CD4-positive, alpha-beta memory T cell (primary cell): ENCODE measurements at regions of chr17 and their contacts with region 1.

Region 1: DNA sequence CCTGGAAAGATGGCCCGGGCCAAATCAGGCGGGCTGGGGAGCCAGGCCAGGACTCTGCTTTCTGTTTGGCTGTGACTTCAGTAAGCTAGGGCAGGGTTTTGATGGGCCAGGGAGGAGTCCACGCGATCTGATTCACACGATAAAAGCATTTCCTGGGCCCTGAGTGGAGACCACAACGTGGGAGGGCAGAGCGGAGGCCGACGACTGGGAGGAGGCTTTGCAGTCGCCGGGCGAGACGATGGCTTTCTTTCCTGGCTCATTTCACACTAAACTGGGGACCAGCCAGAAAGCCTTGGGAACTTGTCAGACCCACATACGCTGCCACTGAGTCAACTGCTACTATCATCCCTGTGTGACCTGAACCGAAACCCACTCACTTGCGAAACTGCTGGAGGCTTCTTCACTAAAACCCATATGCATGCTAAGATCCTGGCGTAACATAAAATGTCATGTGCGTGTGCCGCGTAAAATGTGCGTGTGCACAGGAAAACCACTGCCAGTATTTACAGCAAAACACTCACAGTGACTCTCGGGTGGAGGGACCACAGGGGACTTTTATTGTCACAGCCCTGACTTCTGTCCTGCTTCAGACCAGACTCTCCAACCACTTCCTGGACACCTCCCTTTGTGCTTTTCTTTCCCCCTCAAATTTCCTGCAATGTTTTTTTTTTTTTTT is 14.2 kb upstream of the RHBDF2 start:
- DNase-seq: peak; percentile 91 to 95 (median 94)
- H3K4me3 ChIP-seq: peak overlapping the region; percentile 20 to 25
- H3K4me3 Mint-ChIP-seq: peak overlapping the region; percentile 69 to 86 (median 80)
- H3K27ac ChIP-seq: peak overlapping the region; percentile 76
- H3K27ac Mint-ChIP-seq: peak overlapping the region; percentile 94 to 100 (median 99)
- H3K4me1 ChIP-seq: peaks cover 82% of the 10 kb centered on the region
- H3K4me1 Mint-ChIP-seq: peaks cover 31 to 85% (median 51%) of the 10 kb centered on the region in 4 donors
- H3K27me3 ChIP-seq: no peaks in the 10 kb centered on the region
- H3K27me3 Mint-ChIP-seq: no peaks in the 10 kb centered on the region

Region 2: GRCh38 chr17:76492989-76493501 is 22.4 kb before region 1 on chr17:
- CTCF ChIA-PET with region 1: no interaction called
- POLR2A ChIA-PET with region 1: interaction called, 13 read pairs
- intact Hi-C with region 1: no loop called
- DNase-seq: peak; percentile 15 to 53 (median 37)
- H3K4me3 ChIP-seq: peak overlapping the region; percentile 34 to 46
- H3K4me3 Mint-ChIP-seq: peak overlapping the region; percentile 70 to 87 (median 84)
- H3K27ac ChIP-seq: peak overlapping the region; percentile 64
- H3K27ac Mint-ChIP-seq: peak overlapping the region; percentile 74 to 97 (median 94)
- H3K4me1 ChIP-seq: peaks cover 46% of the 10 kb centered on the region
- H3K4me1 Mint-ChIP-seq: peaks cover 17 to 64% (median 42%) of the 10 kb centered on the region in 4 donors
- H3K27me3 ChIP-seq: no peaks in the 10 kb centered on the region
- H3K27me3 Mint-ChIP-seq: no peaks in the 10 kb centered on the region

Region 3: GRCh38 chr17:76501018-76501826 is 14.2 kb before region 1 on chr17 and contains the start of gene RHBDF2:
- CTCF ChIA-PET with region 1: interaction called, 8 read pairs
- POLR2A ChIA-PET with region 1: interaction called, 68 read pairs
- intact Hi-C with region 1: loop called (anchors 1 kb)
- DNase-seq: peak; percentile 92 to 98 (median 95)
- H3K4me3 ChIP-seq: peak within 1 kb of the TSS; percentile 61 to 83
- H3K4me3 Mint-ChIP-seq: peak within 1 kb of the TSS; percentile 86 to 91 (median 89)
- H3K27ac ChIP-seq: peak within 1 kb of the TSS; percentile 69
- H3K27ac Mint-ChIP-seq: peak within 1 kb of the TSS; percentile 85 to 100 (median 98)
- H3K4me1 ChIP-seq: peaks cover 41% of the 10 kb centered on the region
- H3K4me1 Mint-ChIP-seq: peaks cover 15 to 56% (median 40%) of the 10 kb centered on the region in 4 donors
- H3K27me3 ChIP-seq: no peaks in the 10 kb centered on the region
- H3K27me3 Mint-ChIP-seq: no peaks in the 10 kb centered on the region
- total RNA-seq, gene RHBDF2: 50.0 to 62.2 TPM

Region 4: DNA sequence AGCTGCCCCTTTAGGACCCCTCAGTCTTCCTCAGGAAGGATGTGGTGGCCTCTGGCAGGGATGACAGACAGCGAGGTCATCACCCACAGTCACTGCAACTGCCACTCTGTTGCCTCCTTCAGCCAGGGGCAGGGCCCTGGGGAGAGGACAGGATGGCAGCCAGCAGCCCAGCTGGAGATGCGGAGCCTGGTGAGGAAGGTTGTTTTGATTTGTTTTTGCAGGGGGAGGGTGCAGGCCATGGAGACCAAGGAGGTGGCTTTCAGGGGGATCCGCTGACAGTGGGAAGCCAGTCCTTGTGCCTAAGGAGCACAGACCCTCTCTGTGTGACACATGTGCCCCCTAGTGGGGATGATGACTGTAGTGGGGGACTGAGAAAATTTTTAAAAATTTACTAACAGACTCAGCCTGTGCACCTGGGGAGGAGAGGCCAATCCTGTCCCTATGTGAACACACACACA is 31.8 kb after region 1 on chr17:
- CTCF ChIA-PET with region 1: interaction called, 12 read pairs
- POLR2A ChIA-PET with region 1: interaction called, 6 read pairs
- intact Hi-C with region 1: no loop called
- DNase-seq: peak; percentile 37 to 62 (median 59)
- H3K4me3 ChIP-seq: no peak overlapping the region
- H3K4me3 Mint-ChIP-seq: no peak overlapping the region
- H3K27ac ChIP-seq: no peak overlapping the region
- H3K27ac Mint-ChIP-seq: peak overlapping the region in 1 of 7 donors; percentile 38
- H3K4me1 ChIP-seq: peaks cover 7% of the 10 kb centered on the region
- H3K4me1 Mint-ChIP-seq: peaks cover 0 to 2% (median 0%) of the 10 kb centered on the region in 4 donors
- H3K27me3 ChIP-seq: no peaks in the 10 kb centered on the region
- H3K27me3 Mint-ChIP-seq: peaks cover 6% of the 10 kb centered on the region in 2 donors